ENCODE measurements at regions of chr17 and their contacts with region 1.

Region 1: DNA sequence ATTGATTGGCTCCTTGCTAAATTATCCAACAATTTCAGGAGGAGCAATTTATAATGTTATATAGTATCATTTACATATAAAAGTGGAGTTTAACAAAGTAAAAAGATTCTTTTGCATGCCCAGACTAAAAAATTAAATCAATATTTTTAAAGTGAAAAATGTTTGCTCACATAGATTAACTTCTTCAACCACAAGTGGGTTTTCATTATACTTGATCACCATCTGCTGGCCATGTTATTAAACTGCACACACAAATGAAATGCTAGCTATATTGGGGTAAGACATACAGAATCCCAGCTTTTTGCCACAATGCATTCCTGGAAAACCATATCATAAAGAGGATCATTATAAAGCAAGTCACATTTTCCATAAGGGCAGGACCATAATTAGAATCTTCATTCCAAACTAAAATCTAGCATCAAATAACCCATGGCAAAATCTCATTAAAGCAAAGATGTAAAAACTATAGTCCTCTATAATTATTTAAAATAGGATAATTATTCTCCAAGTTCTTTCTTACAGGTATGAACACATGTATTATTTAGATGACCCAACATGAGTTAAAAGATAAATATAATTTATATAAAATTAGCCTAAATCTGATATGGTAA is 26.3 kb downstream of the CEP112 start:
- DNase-seq: peak; percentile 13
- H3K4me3 ChIP-seq: no peak overlapping the region
- H3K27ac ChIP-seq: no peak overlapping the region
- H3K4me1 ChIP-seq: no peaks in the 10 kb centered on the region
- H3K27me3 ChIP-seq: no peaks in the 10 kb centered on the region
- CTCF ChIP-seq: peak; percentile 59 to 84 (median 78)
- POLR2A ChIP-seq: no peak

Region 2: GRCh38 chr17:65231662-65232335 is 933.8 kb before region 1 on chr17:
- intact Hi-C with region 1: loop called (anchors 10 kb)
- DNase-seq: peak; percentile 16
- H3K4me3 ChIP-seq: no peak overlapping the region
- H3K27ac ChIP-seq: no peak overlapping the region
- H3K4me1 ChIP-seq: no peaks in the 10 kb centered on the region
- H3K27me3 ChIP-seq: peaks cover 7% of the 10 kb centered on the region
- CTCF ChIP-seq: peak in 2 of 4 experiments; percentile 49 to 64
- POLR2A ChIP-seq: no peak

Region 3: DNA sequence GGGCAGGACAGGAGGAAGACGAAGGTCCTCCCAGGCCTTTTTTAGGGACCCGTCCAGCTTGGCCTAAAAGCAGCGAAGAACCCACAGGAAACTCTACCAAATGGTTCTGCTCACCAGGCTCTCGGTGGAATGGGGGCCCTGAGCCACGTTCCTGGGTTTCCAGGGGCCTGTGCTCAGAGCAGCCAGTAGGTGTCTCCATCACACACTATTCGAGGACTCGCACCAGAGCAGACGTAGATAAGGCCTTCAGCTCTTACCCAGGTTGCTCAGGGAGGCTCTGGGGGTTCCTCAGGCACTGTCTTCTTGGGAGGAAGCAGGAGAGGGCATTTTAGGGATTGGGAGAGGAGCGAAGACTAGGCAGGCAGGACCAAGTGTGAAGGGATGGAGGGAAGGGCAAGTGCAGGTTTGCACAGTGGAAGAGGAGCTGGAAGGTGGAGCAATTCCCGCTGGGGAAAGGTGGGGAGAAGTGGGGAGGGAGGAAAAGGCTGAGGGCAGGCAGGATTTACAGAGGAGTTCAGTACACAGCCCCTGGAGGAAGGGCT is 871.4 kb before region 1 on chr17:
- intact Hi-C with region 1: loop called (anchors 5 kb)
- DNase-seq: peak; percentile 51
- H3K4me3 ChIP-seq: no peak overlapping the region
- H3K27ac ChIP-seq: no peak overlapping the region
- H3K4me1 ChIP-seq: no peaks in the 10 kb centered on the region
- H3K27me3 ChIP-seq: no peaks in the 10 kb centered on the region
- CTCF ChIP-seq: peak in 3 of 4 experiments; percentile 59 to 76 (median 74)
- POLR2A ChIP-seq: no peak

Region 4: GRCh38 chr17:65455972-65456343 is 709.7 kb before region 1 on chr17:
- intact Hi-C with region 1: loop called (anchors 10 kb)
- DNase-seq: peak; percentile 18
- H3K4me3 ChIP-seq: no peak overlapping the region
- H3K27ac ChIP-seq: no peak overlapping the region
- H3K4me1 ChIP-seq: no peaks in the 10 kb centered on the region
- H3K27me3 ChIP-seq: no peaks in the 10 kb centered on the region
- CTCF ChIP-seq: peak in 2 of 4 experiments; percentile 27 to 39
- POLR2A ChIP-seq: no peak